Activated T-helper 1 cell treated with anti-CD3 and anti-CD28 coated beads, Interleukin-12 subunit alpha, Interleukin-12 subunit beta, Interleukin-2, Interleukin-4 antibody, amounts not matched to agents 30 ng/mL and 10 ng/mL and 1 ng/mL, durations not matched to agents 14 hours and 24 hours and 36 hours (primary cell): ENCODE measurements at regions of chr12 and their contacts with region 1.

Region 1: GRCh38 chr12:120327593-120327992 is at the start of gene PLA2G1B:
- DNase-seq: no peak
- H3K4me3 Mint-ChIP-seq: peak within 1 kb of the TSS; percentile 7
- H3K27ac Mint-ChIP-seq: no peak within 1 kb of the TSS
- H3K4me1 Mint-ChIP-seq: peaks cover 11% of the 10 kb centered on the region
- H3K27me3 Mint-ChIP-seq: peaks cover 17% of the 10 kb centered on the region
- total RNA-seq, gene PLA2G1B: not detected in 2 replicates

Region 2: DNA sequence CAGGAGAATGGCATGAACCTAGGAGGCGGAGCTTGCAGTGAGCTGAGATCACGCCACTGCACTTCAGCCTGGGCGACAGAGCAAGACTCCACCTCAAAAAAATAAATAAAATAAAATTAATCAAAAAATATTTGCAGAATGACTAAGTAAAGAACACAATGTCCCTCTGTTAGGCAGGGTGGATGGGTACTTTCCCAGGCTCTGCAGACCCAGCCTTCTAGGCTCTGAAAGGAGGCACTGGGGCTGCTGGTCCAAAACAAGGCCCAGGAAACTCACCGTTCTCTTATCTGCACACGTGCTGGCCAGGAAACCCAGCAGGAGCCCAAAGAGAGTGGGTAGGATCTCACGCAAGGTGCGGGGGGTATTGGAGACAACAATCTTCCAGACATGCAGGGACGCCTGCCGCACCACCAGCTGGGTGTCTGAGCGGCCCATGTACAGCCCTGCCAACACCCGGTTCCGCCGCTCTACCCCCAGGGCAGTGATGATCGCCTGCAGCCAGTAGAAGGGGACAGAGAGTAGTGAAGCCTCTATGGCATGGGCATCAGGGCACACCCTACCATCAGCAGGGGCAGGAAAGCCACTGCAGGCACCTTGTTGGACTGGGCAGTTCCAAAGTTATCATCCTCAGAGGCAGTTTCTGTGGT is 185.2 kb before region 1 on chr12:
- intact Hi-C with region 1: no loop called
- DNase-seq: no peak
- H3K4me3 Mint-ChIP-seq: no peak overlapping the region
- H3K27ac Mint-ChIP-seq: no peak overlapping the region
- H3K4me1 Mint-ChIP-seq: no peaks in the 10 kb centered on the region
- H3K27me3 Mint-ChIP-seq: no peaks in the 10 kb centered on the region

Region 3: DNA sequence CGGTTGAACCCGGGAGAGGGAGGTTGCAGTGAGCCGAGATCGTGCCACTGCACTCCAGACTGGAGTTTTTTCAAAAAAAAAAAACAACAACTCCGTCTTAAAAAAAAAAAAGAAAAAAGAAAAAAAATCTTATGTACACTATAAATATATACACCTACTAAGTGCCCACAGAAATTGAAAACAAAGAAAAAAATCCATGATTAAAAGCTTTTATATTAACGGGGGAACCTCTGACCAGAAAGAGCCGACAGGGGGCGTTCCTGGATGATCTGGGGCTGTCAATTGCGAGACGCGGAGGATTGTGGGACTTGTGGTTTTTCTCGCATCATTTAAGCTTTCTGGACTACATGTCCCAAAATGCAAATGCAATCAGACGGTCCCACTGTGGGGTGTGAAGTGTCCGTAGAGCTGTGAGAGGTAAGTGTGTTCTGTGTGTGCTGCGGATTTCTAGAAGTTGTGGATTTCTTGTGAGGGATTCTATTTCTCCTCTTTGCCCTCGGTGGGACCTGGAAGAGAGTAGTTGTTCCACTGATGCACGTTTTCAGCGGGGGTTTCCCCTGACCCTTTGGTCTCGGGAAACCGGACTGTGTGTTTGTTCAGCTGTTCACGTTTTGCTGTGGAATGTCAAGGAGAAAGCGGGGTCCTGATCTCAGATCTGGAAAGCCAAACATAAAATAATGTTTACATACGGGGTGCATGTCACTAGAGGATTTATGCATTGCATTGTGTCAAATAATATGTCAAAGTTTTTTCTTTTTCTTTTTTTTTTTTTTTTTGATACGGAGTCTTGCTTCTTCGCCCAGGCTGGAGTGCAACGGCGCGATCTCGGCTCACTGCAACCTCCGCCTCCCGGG is 25.4 kb before region 1 on chr12 and contains the start of gene SIRT4:
- intact Hi-C with region 1: loop called (anchors 2 kb)
- DNase-seq: peak; percentile 85
- H3K4me3 Mint-ChIP-seq: peak within 1 kb of the TSS; percentile 96
- H3K27ac Mint-ChIP-seq: peak within 1 kb of the TSS; percentile 86
- H3K4me1 Mint-ChIP-seq: peaks cover 6% of the 10 kb centered on the region
- H3K27me3 Mint-ChIP-seq: peaks cover 5% of the 10 kb centered on the region
- total RNA-seq, gene SIRT4: 1.0 and 1.7 TPM in 2 replicates

Region 4: GRCh38 chr12:120356567-120357030 is 29.0 kb after region 1 on chr12:
- intact Hi-C with region 1: loop called (anchors 1 kb)
- DNase-seq: peak; percentile 49
- H3K4me3 Mint-ChIP-seq: no peak overlapping the region
- H3K27ac Mint-ChIP-seq: no peak overlapping the region
- H3K4me1 Mint-ChIP-seq: no peaks in the 10 kb centered on the region
- H3K27me3 Mint-ChIP-seq: peaks cover 27% of the 10 kb centered on the region

Region 5: GRCh38 chr12:120469450-120470149 is 142.0 kb after region 1 on chr12 and contains the start of gene SRSF9:
- intact Hi-C with region 1: loop called (anchors 2 kb)
- DNase-seq: peak; percentile 97
- H3K4me3 Mint-ChIP-seq: peak within 1 kb of the TSS; percentile 95
- H3K27ac Mint-ChIP-seq: peak within 1 kb of the TSS; percentile 87
- H3K4me1 Mint-ChIP-seq: peaks cover 52% of the 10 kb centered on the region
- H3K27me3 Mint-ChIP-seq: peaks cover 2% of the 10 kb centered on the region
- total RNA-seq, gene SRSF9: 233 and 239 TPM in 2 replicates

Region 6: DNA sequence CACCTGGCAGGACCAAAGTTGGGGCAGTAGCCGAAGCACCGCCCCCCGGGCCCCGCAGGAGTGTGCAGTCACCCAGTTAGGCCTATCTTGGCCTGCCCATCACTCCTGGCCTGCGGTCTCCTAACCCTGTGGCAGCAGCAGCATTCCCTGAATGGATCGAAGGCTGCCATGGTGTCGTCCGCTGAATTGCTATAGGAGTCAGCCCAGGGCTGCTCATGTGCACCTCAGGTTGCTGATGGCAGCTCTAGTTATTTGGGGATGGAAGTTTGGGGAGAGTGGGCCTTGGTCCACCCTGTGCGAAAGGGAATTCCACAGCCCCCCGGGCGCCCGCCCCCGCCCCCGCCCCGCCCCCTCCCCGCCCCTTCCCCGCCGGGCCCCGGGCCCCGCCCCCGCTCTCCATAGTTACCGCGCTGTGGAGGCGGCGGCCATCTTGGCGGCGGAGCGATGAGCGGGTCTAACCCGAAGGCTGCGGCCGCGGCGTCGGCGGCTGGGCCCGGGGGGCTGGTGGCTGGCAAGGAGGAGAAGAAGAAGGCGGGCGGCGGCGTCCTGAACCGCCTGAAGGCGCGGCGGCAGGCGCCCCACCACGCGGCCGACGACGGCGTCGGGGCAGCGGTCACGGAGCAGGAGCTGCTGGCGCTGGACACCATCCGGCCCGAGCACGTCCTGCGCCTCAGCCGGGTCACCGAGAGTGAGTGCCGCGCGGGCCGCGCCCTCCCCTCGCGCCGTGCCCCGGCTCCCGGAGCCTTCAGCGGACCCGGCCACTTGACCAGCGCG is 382.6 kb after region 1 on chr12 and contains the start of gene UNC119B:
- intact Hi-C with region 1: loop called (anchors 2 kb)
- DNase-seq: peak; percentile 71
- H3K4me3 Mint-ChIP-seq: peak within 1 kb of the TSS; percentile 91
- H3K27ac Mint-ChIP-seq: peak within 1 kb of the TSS; percentile 89
- H3K4me1 Mint-ChIP-seq: peaks cover 37% of the 10 kb centered on the region
- H3K27me3 Mint-ChIP-seq: no peaks in the 10 kb centered on the region
- total RNA-seq, gene UNC119B: 24.2 and 24.6 TPM in 2 replicates

Region 7: GRCh38 chr12:121351820-121352681 is 1024.5 kb after region 1 on chr12 and contains the start of gene ANAPC5:
- intact Hi-C with region 1: no loop called
- DNase-seq: peak; percentile 90
- H3K4me3 Mint-ChIP-seq: peak within 1 kb of the TSS; percentile 95
- H3K27ac Mint-ChIP-seq: peak within 1 kb of the TSS; percentile 98
- H3K4me1 Mint-ChIP-seq: peaks cover 33% of the 10 kb centered on the region
- H3K27me3 Mint-ChIP-seq: peaks cover 10% of the 10 kb centered on the region
- total RNA-seq, gene ANAPC5: 139 and 144 TPM in 2 replicates